Activated CD8-positive, alpha-beta T cell treated with anti-CD3 and anti-CD28 coated beads, Interleukin-2, amount 10 ng/mL, durations not matched to agents 7 days and 5 days (primary cell): ENCODE measurements at regions of chr9 and their contacts with region 1.

Region 1: DNA sequence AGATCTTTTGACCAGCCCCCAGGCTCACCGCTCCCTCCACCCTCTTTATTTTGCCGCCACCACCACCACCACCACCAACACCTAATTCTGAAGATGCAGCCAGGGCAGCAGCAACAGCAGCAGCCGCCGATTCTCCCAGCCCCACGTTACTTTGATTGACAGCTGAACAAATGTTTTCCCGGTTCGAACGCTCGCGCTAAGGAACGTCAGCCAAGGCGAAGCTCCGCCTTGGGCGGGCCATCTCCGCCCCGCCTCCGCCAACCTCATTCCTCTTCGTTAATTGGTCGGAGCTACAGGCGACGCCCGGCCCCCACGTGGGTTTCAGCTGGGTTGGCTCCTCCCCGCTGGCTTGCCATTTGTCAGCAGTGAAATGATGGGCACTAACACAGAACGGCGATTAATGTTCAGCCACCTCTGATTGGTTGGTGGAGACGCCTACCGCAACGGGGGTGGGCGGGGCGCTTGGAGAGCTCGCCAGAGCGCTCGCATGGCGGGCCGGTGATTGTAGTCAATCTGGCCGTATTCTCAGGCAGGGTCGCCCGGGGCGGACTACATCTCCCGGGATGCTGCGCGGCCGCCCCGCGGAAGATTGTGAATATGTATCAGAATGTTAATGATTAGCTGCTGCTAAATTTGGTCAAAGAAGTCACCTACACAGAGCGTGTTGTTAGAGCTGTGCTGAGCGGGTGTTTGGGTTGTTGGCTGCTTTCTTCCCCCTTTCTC is at the start of gene TLE4:
- DNase-seq: peak; percentile 100
- ATAC-seq: peak; percentile 88
- H3K4me3 Mint-ChIP-seq: peak within 1 kb of the TSS; percentile 72
- H3K27ac Mint-ChIP-seq: peak within 1 kb of the TSS; percentile 80
- H3K4me1 Mint-ChIP-seq: peaks cover 30% of the 10 kb centered on the region
- H3K27me3 Mint-ChIP-seq: peaks cover 2% of the 10 kb centered on the region
- total RNA-seq, gene TLE4: 47.7 to 51.8 TPM

Region 2: GRCh38 chr9:79542735-79543620 is 28.5 kb before region 1 on chr9:
- CTCF ChIA-PET with region 1: no interaction called
- POLR2A ChIA-PET with region 1: interaction called, 16 read pairs
- DNase-seq: no peak
- ATAC-seq: no peak
- H3K4me3 Mint-ChIP-seq: no peak overlapping the region
- H3K27ac Mint-ChIP-seq: no peak overlapping the region
- H3K4me1 Mint-ChIP-seq: peaks cover 24% of the 10 kb centered on the region
- H3K27me3 Mint-ChIP-seq: no peaks in the 10 kb centered on the region

Region 3: DNA sequence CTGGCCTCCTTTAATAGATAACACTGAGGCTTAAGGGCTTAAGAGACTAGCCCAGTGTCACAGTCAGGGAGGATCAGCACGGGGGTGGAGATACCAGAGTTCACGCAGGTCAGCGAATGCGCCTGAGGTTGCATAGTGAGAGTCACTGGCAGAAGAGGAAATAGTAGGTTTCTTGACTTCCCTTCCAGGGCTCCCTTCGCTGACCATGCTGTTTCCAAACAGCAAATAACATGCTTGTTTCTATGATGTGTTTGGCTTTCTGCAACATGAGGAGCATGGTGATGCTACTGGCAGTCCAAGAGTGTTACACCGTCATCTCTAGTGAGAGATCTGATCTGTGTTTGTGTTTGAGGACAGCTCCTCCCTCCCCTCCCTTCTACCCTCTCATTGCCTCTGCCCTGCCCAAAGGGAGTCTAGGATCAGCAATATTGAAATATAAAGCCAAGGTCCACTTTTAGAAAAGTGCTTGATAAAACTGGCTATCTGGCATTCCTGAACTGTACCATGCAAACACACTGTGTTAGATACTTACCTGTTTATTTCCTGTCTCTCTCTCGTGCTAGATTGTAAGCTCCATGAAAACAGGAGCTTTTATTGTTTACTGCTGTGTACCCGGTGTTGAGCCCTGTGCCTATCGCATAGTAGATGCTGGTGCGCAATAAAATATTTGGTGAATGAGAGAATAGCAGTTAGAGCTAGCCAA is 12.6 kb after region 1 on chr9:
- CTCF ChIA-PET with region 1: interaction called, 6 read pairs
- POLR2A ChIA-PET with region 1: interaction called, 50 read pairs
- DNase-seq: peak; percentile 50
- ATAC-seq: peak; percentile 62
- H3K4me3 Mint-ChIP-seq: no peak overlapping the region
- H3K27ac Mint-ChIP-seq: peak overlapping the region; percentile 32
- H3K4me1 Mint-ChIP-seq: peaks cover 59% of the 10 kb centered on the region
- H3K27me3 Mint-ChIP-seq: no peaks in the 10 kb centered on the region

Region 4: DNA sequence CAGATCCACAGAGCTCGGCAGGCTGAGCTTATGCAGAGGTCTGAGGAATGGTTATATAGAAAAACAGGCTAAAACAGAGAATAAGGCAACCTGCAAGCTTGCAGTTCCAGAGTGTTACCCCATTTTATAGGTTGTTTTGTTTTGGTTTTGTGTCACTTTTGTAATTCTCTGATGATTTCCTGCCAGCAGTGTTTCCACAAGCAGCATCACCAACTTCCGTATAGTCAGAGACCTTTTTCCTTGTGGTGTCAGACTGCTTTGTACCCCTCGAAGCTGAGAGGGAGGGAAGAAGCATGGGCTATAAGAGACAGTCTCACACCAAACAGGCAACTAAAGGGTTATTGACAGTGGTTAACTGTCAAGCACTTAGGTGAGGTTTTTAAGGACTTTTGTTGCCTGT is 62.1 kb after region 1 on chr9:
- CTCF ChIA-PET with region 1: interaction called, 3 read pairs
- POLR2A ChIA-PET with region 1: interaction called, 15 read pairs
- DNase-seq: peak; percentile 25
- ATAC-seq: peak; percentile 43
- H3K4me3 Mint-ChIP-seq: no peak overlapping the region
- H3K27ac Mint-ChIP-seq: peak overlapping the region; percentile 30
- H3K4me1 Mint-ChIP-seq: peaks cover 58% of the 10 kb centered on the region
- H3K27me3 Mint-ChIP-seq: no peaks in the 10 kb centered on the region